ENCODE measurements at regions of chr3 and their contacts with region 1.

Region 1: GRCh38 chr3:160754855-160755747 is 930 bp upstream of the PPM1L start:
- DNase-seq: peak; percentile 97
- H3K4me3 Mint-ChIP-seq: peak overlapping the region; percentile 95
- H3K27ac Mint-ChIP-seq: peak overlapping the region; percentile 93
- H3K4me1 Mint-ChIP-seq: peaks cover 23% of the 10 kb centered on the region
- H3K27me3 Mint-ChIP-seq: no peaks in the 10 kb centered on the region
- CTCF ChIP-seq: no peak

Region 2: GRCh38 chr3:160784848-160785247 is 29.7 kb after region 1 on chr3:
- CTCF ChIA-PET with region 1: no interaction called
- intact Hi-C with region 1: loop called (anchors 2 kb)
- DNase-seq: peak; percentile 77
- H3K4me3 Mint-ChIP-seq: peak overlapping the region; percentile 54
- H3K27ac Mint-ChIP-seq: peak overlapping the region; percentile 96
- H3K4me1 Mint-ChIP-seq: peaks cover 41% of the 10 kb centered on the region
- H3K27me3 Mint-ChIP-seq: no peaks in the 10 kb centered on the region
- CTCF ChIP-seq: no peak

Region 3: DNA sequence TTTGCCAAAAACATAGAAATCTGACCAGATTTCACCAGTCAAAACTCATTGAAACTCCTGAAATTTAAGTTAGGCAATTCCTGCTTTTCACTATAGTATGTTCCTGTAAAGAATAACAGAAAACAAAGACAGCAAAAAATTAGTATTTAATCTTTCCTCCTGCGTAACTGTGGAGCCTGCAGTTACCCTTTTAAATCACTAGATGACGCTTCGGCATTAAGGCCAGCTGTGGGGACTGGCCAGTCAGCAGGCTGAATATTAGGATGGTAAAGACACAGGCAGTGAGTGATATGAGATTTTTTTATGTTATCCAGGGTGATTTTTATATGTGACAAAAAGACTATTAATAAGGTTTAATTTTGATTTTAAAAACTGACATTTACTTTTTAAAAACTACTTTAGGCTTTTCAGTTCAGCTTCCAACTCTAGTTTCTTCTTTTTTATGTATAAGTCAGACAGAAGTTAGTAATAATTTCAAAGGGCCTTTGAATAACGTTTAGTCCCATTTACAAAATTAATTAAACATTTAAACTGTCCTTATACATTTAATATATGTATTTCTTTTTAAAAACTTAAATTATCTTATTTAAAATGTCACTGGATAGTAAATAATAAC is 166.0 kb after region 1 on chr3:
- CTCF ChIA-PET with region 1: no interaction called
- intact Hi-C with region 1: loop called (anchors 2 kb)
- DNase-seq: peak; percentile 52
- H3K4me3 Mint-ChIP-seq: no peak overlapping the region
- H3K27ac Mint-ChIP-seq: no peak overlapping the region
- H3K4me1 Mint-ChIP-seq: no peaks in the 10 kb centered on the region
- H3K27me3 Mint-ChIP-seq: no peaks in the 10 kb centered on the region
- CTCF ChIP-seq: peak; percentile 94

Region 4: GRCh38 chr3:160929595-160929994 is 174.5 kb after region 1 on chr3:
- CTCF ChIA-PET with region 1: interaction called, 3 read pairs
- intact Hi-C with region 1: loop called (anchors 1 kb)
- DNase-seq: peak; percentile 63
- H3K4me3 Mint-ChIP-seq: no peak overlapping the region
- H3K27ac Mint-ChIP-seq: no peak overlapping the region
- H3K4me1 Mint-ChIP-seq: no peaks in the 10 kb centered on the region
- H3K27me3 Mint-ChIP-seq: no peaks in the 10 kb centered on the region
- CTCF ChIP-seq: no peak

Region 5: GRCh38 chr3:160948272-160948671 is 193.2 kb after region 1 on chr3:
- CTCF ChIA-PET with region 1: no interaction called
- intact Hi-C with region 1: no loop called
- DNase-seq: peak; percentile 6
- H3K4me3 Mint-ChIP-seq: no peak overlapping the region
- H3K27ac Mint-ChIP-seq: no peak overlapping the region
- H3K4me1 Mint-ChIP-seq: peaks cover 11% of the 10 kb centered on the region
- H3K27me3 Mint-ChIP-seq: no peaks in the 10 kb centered on the region
- CTCF ChIP-seq: no peak

Measured in Calu3 (cell line).